ENCODE measurements at regions of chr7 and their contacts with region 1.

Region 1: DNA sequence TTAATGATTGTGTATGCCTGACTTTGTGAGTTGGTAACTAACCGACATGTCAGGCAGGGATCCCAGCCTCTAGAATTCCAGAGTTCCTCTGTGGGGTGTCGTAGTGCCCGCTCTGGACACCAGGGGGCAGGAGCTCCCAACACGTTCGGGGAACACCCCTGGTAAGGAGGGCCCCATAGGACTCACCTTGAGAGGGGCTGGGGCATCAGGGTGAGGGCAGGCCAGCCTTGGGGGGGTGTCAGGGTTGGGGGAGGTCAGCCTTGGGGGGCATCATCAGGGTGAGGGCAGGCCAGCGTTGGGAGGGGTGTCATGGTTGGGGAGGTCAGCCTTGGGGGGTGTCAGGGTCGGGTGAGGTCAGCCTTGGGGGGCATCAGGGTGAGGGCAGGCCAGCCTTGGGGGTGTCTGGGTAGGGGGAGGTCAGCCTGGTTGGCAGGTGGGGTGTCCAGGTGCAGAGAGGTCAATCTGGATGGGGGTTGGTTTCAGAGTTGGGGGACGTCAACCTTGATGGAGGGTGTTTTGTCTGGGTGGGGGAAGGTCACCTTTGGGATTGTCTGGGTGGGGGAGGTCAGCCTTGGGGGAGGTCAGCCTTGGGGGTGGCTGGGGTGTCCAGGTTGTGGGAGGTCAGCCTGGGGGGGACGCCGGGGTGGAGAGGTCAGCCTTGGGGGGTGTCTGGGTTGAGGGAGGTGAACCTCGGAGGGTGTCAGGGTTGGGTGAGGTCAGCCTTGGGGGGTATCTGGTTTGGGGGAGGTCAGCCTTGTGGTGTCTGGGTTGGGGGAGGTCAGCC is 45.6 kb upstream of the SUN1 start:
- DNase-seq: peak; percentile 28
- H3K4me3 Mint-ChIP-seq: no peak overlapping the region
- H3K27ac Mint-ChIP-seq: no peak overlapping the region
- H3K4me1 Mint-ChIP-seq: no peaks in the 10 kb centered on the region
- H3K27me3 Mint-ChIP-seq: no peaks in the 10 kb centered on the region

Region 2: DNA sequence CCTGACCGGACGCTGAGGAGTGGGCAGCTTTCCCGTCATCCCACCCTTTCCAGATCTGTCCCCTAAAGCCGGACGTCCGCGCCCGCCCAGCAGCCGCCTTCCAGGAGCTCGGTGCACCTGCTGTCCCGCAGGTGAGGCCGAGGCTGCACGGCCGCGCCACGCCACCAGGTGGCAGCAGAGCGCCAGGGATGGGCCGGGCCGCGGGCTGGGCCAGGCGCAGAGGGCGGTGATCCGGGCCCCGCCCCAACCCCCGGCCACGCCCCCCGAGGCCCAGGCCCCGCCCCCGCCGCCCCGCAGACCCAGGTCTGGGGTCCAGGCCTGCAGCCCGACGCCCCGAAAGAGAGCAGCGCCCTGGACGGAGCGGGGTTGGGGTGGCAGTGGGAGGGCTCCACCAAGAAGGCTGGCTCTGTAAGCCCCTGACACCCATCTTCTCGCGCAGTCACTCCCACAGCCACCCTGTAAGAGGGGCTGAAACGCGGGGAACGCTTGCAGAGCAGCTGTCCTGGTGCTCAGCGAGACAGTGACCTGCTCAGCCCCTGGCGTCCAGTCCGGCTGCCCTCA is 464.5 kb before region 1 on chr7:
- intact Hi-C with region 1: loop called (anchors 1 kb)
- DNase-seq: peak; percentile 78
- H3K4me3 Mint-ChIP-seq: no peak overlapping the region
- H3K27ac Mint-ChIP-seq: no peak overlapping the region
- H3K4me1 Mint-ChIP-seq: no peaks in the 10 kb centered on the region
- H3K27me3 Mint-ChIP-seq: peaks cover 7% of the 10 kb centered on the region

Region 3: DNA sequence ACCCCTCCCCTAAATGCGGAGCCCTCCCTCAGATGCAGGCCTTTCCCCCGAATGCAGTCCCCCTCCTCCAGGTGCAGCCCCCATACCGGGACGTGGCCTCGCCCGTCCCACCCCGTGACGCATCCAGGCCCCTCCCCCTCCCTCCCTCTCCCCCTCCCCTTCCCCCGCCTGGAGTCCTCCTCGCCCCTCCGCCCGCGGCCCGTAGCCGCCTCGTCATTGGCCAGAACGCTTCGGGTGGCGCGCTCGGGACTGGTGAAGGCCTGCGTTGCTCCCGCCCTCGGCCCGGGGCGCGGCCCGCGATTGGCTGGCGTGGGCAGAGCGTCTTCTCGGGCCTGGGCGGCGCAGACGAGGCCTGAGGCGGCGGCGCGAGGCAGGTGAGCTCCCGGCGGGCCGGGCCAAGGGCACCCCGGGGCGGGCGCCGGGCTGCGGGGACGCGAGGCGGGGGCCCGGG is 29.7 kb after region 1 on chr7:
- intact Hi-C with region 1: loop called (anchors 1 kb)
- DNase-seq: peak; percentile 96
- H3K4me3 Mint-ChIP-seq: no peak overlapping the region
- H3K27ac Mint-ChIP-seq: no peak overlapping the region
- H3K4me1 Mint-ChIP-seq: peaks cover 55% of the 10 kb centered on the region
- H3K27me3 Mint-ChIP-seq: peaks cover 19% of the 10 kb centered on the region

Region 4: GRCh38 chr7:831596-832166 is 45.0 kb after region 1 on chr7:
- intact Hi-C with region 1: loop called (anchors 1 kb)
- DNase-seq: no peak
- H3K4me3 Mint-ChIP-seq: peak overlapping the region; percentile 80
- H3K27ac Mint-ChIP-seq: peak overlapping the region; percentile 93
- H3K4me1 Mint-ChIP-seq: peaks cover 30% of the 10 kb centered on the region
- H3K27me3 Mint-ChIP-seq: no peaks in the 10 kb centered on the region

Region 5: DNA sequence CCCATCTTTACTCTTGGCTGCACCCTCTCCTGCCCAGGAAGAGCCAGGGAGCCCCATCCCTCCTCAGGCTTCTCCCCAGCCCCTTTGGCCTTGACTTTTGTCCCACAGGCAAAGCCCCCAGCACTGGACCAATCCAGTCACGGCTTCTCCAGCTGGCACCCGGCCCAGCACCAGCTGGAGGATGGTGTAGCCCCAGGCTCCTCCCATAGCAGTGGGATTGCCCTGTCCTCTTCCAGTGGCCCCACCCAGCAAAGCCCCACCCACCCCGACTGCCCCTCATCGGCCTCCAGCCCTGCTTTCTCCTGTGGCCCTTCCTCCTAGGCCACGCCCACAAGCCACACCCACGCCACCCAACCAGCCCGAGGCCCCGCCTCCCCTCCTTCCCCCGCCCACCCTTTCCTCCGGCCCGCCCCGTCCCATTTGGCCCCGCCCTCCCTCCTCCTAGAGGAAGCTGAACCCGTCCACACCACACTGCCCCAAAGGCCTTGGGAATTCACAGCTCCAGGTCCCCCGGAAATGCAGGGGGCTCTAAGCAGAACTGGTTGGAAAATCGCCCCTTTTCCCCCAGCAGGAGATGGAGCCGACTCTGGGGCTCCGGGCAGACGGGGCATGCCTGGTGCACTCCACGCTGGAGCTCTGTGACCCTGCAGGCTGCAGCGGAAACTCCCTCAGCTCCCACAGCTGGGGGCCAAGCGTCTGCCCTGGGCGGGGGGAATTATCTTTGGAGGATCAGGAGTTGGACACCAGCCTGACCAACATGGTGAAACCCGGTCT is 114.9 kb after region 1 on chr7:
- intact Hi-C with region 1: no loop called
- DNase-seq: peak; percentile 37
- H3K4me3 Mint-ChIP-seq: no peak overlapping the region
- H3K27ac Mint-ChIP-seq: no peak overlapping the region
- H3K4me1 Mint-ChIP-seq: no peaks in the 10 kb centered on the region
- H3K27me3 Mint-ChIP-seq: peaks cover 5% of the 10 kb centered on the region

Region 6: DNA sequence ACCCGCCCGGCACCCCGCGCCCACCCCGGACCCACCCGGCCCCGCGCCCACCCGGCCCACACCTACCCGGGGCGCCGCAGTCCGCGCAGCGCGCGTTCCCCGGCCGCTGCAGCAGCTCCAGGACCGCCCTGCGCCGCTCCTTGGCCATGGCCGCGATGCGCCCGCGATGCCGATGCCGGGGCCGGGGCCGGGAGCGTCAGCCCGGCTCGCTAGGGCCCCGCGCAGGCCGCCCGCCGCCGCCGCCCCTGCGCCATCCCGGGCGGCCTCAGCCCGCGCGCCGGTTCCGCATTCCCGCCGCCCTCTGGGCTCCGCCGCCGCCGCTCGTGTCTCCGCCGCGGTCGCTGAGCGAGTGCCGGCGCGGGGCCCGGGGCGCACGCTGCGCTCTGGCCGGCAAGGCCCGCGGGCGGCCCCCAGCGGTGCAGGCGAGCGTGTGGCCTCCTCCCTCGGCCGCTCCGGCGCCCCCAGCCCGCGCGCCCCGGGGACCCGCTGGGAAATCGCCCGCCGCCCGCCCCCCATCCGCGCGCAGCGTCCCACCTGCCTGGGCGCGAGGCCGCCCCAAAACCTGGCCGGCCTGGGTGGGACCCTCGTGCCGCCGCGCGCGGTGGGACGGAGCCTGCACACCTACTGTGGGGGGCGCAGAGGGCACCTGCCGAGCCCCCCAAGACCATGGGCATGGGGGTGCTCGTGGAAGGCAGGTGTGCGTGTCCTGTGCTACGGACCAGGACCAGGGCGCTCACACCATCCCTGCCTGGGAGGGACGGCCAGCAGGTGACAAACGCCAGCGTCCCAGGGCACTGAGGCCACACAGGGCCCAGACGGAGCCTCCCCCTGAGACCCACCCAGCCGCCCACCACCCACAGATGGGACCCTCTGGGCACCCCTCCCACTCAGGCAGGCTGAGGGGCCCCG is 167.9 kb after region 1 on chr7 and contains the start of gene ADAP1:
- intact Hi-C with region 1: loop called (anchors 10 kb)
- DNase-seq: peak; percentile 41
- H3K4me3 Mint-ChIP-seq: peak within 1 kb of the TSS; percentile 84
- H3K27ac Mint-ChIP-seq: peak within 1 kb of the TSS; percentile 7
- H3K4me1 Mint-ChIP-seq: no peaks in the 10 kb centered on the region
- H3K27me3 Mint-ChIP-seq: peaks cover 7% of the 10 kb centered on the region
- total RNA-seq, gene ADAP1: 80.9 and 87.7 TPM in 2 replicates

Region 7: DNA sequence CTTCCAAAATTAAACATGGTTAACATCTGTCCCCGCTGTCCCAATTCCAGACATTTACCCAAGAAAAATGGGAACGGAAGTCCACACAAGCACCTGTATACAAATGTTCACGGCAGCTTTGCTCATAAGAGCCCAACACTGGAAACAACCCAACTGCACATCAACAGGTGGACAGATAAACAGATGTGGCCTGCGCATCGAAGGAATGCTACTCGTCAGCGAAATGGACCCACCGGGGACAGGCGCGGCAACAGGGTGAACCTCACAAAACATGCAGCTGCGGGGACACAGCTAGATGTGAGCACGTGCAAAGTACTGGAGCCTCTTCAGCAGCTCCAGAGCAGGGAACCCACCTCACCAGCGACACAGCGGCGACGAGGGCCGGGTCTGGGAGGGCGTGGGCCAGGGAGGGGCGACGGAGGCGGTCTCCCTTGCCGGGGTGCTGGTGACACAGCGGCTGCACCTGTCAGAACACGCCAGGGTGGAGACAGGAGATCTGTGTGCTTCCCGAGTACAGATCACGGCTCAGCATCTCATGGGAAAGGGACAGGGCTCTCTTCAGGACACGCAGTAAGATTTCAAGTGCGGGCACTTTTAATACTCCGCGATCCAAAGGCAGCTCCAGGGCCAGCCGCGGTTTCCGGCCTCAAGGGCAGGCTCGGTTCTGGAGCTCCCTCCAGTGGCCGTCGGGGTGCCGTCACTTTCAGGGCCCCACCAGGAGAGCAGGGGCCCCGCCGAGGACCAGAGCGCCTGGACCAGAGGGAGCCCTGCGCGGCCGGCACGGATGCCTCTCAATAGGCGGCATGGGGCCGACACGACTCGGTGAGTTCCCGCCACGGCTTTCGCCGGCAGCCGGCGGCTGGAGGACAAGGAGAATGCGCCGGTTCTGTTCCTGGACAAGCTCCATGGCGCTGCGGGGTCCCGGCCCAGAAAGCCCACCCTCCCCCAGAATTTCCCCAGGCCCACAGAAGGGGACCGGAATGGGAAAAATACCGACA is 278.9 kb after region 1 on chr7:
- intact Hi-C with region 1: loop called (anchors 5 kb)
- DNase-seq: peak; percentile 74
- H3K4me3 Mint-ChIP-seq: no peak overlapping the region
- H3K27ac Mint-ChIP-seq: no peak overlapping the region
- H3K4me1 Mint-ChIP-seq: peaks cover 4% of the 10 kb centered on the region
- H3K27me3 Mint-ChIP-seq: no peaks in the 10 kb centered on the region

Region 8: GRCh38 chr7:1255131-1256032 is 468.7 kb after region 1 on chr7:
- intact Hi-C with region 1: no loop called
- DNase-seq: no peak
- H3K4me3 Mint-ChIP-seq: no peak overlapping the region
- H3K27ac Mint-ChIP-seq: no peak overlapping the region
- H3K4me1 Mint-ChIP-seq: no peaks in the 10 kb centered on the region
- H3K27me3 Mint-ChIP-seq: peaks cover 13% of the 10 kb centered on the region

Measured in activated T-helper 1 cell treated with anti-CD3 and anti-CD28 coated beads, Interleukin-12 subunit alpha, Interleukin-12 subunit beta, Interleukin-2, Interleukin-4 antibody, amounts not matched to agents 30 ng/mL and 10 ng/mL and 1 ng/mL, durations not matched to agents 14 hours and 24 hours and 36 hours (primary cell).